Activated naive CD4-positive, alpha-beta T cell treated with anti-CD3 and anti-CD28 coated beads for 36 hours (primary cell): ENCODE measurements at regions of chr3 and their contacts with region 1.

Region 1: DNA sequence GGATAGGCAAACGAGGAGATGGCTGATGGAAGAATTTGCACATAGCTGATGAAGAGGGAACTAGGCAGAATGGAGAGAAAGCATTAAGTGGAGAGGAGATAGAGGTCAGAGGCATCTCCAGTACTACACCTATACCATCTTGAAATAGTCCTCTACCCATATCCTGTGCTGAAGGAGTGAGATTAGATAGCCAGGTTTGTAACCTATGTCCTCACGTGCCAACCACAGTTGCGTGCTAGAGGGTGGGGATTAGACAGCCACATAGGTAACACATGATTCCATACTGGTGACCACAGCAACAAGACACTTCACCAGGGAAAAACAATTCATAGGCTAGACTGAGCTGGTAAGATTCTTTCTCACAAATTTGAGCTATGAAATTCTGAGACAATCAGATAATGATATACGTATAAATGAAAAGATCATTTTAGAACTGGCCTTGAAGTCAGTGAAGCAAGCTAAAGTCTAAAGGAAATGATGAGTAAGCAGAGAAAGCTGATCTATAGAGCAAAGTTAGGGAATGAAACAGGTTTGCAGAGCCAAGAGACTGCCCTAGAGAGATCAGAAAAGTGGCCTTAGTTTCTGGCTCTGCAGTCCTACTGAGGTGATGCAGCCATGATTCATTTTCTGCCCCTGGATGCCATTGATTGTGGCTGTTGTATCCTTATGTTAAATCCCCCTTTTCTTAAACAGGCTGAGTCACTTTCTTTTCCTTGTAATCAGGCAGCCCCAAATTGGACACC is 17.7 kb downstream of the MYNN start:
- DNase-seq: no peak
- H3K4me3 Mint-ChIP-seq: no peak overlapping the region
- H3K27ac Mint-ChIP-seq: no peak overlapping the region
- H3K4me1 Mint-ChIP-seq: no peaks in the 10 kb centered on the region
- H3K27me3 Mint-ChIP-seq: no peaks in the 10 kb centered on the region

Region 2: GRCh38 chr3:169575373-169575772 is 215.5 kb before region 1 on chr3:
- CTCF ChIA-PET with region 1: no interaction called
- intact Hi-C with region 1: no loop called
- DNase-seq: no peak
- H3K4me3 Mint-ChIP-seq: no peak overlapping the region
- H3K27ac Mint-ChIP-seq: no peak overlapping the region
- H3K4me1 Mint-ChIP-seq: no peaks in the 10 kb centered on the region
- H3K27me3 Mint-ChIP-seq: peaks cover 24% of the 10 kb centered on the region

Region 3: DNA sequence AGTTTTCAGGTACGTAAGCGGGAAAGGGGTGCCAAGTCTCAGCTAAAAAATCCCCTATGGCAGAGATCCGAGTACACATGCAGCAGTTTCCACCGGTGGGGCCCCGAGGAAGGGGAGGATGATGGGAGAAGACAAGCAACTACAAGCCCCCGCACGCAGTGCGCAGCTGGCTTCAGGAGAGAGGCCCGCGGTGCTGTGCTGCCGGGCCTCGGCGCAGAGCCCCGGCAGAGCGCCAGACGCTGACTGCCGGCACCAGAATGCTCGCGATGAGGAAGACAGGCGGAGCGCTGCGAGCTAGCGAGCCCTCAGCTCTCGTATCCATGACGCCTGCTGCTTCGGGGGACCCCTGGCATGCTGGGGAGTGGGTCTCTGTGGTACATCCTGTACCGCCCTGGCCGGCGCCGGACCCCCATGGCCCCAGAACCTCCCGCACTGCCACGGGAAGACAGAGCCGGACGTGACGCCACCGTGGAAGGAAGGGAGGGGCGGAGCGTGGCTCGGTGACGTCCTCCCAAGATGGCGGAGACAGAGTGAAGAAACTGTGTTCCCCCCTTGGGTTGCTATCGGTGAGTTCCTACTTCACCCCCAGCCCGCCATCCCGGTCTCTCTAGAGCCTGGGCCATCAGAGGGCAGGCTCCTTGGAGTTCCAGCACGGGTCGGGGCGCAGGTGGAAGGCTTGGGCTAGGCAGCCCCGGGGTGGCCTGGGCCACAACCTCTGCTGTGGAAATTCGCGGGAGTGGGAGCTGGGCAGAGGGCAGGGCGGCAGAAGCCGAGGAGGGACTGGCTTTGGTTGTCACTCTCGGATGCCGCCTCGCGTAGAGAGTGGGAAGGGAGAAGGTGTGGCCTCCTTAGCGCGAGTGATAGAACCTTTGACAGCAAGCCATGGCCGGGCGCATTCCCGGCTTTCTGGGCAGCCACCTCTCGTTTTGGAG is 17.7 kb before region 1 on chr3 and contains the start of gene MYNN:
- CTCF ChIA-PET with region 1: interaction called, 3 read pairs
- intact Hi-C with region 1: loop called (anchors 2 kb)
- DNase-seq: peak; percentile 94
- H3K4me3 Mint-ChIP-seq: peak within 1 kb of the TSS; percentile 94
- H3K27ac Mint-ChIP-seq: peak within 1 kb of the TSS; percentile 97
- H3K4me1 Mint-ChIP-seq: peaks cover 36% of the 10 kb centered on the region
- H3K27me3 Mint-ChIP-seq: no peaks in the 10 kb centered on the region
- total RNA-seq, gene MYNN: 12.0 to 13.5 TPM